ENCODE measurements at regions of chr19 and their contacts with region 1.

Region 1: GRCh38 chr19:17938092-17938845 is 5.5 kb downstream of the CCDC124 start:
- DNase-seq: peak; percentile 76 to 87 (median 87)
- ATAC-seq: peak; percentile 92
- H3K4me3 ChIP-seq: no peak overlapping the region
- H3K4me1 ChIP-seq: peaks cover 12% of the 10 kb centered on the region
- CTCF ChIP-seq: peak; percentile 87

Region 2: DNA sequence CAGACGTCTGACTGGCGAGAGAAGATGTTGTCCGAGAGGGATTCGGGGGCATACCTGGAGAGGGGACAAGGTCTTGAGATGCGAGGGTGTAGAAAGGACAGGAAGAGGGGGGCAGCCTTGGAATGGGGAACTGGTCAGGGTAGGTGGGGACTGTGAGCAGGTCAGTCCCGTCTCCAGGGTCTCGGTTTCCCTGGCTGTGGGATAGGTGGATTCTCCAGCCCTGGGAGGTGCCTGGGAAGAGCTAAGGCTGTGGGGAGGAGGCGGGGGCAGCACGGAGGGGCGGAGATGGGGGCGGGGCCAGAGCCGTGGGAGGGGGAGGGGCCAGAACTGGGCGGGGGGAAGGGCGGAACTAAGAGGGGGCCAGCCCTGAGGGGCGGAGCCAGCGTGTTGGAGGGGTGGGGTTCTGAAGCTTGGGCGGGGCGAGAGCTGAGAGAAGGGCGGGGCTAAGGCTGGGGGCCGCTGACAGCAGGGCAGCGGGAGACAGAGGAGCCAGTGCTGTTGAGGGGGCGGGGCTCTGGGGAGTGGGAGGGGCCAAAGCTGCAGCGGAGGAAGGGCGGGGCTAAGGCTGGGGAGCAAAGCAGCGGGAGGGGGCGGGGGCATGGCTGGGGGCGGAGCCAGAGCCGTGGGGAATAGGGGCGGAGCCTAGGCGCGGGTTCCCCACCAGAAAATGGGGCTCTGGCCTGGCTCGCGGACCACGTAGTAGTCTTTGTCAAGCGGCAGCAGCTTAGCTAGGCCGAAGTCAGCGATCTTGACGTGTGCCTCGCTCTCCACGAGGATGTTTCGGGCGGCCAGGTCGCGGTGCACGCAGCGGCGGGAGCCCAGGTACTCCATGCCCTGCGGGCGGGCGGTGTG is 107.5 kb before region 1 on chr19:
- intact Hi-C with region 1: no loop called
- DNase-seq: peak; percentile 86 to 90 (median 89)
- ATAC-seq: peak; percentile 94
- H3K4me3 ChIP-seq: no peak overlapping the region
- H3K4me1 ChIP-seq: peaks cover 4% of the 10 kb centered on the region
- CTCF ChIP-seq: no peak

Region 3: DNA sequence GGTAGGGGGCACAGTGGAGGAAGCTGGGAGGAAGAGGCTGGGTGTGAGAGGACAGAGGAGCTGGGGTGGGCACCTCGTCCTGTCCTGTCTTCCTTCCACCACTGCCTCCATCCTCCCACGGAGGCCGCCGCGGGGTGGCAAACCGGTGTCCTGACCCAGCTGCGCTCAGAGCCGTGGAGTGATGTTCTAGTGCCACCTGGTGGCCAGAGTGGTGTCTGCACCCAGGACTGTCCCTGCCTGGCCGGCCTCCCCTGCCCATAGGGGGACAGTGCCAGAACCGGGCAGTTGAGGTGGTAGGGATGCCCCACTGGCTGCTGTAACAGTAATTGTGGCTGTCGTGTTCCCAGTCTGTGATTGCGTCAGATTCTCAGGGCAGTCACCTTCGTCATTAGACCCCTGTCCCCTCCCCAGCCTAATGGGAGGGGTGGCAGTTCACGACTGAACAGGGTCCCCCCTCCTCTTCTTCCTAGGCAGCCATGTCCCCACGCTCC is 58.6 kb after region 1 on chr19:
- intact Hi-C with region 1: loop called (anchors 2 to 5 kb)
- DNase-seq: peak; percentile 83 to 93 (median 92)
- ATAC-seq: peak; percentile 68
- H3K4me3 ChIP-seq: no peak overlapping the region
- H3K4me1 ChIP-seq: peaks cover 15% of the 10 kb centered on the region
- CTCF ChIP-seq: peak; percentile 96